ENCODE measurements at regions of chr9 and their contacts with region 1.

Region 1: GRCh38 chr9:114385412-114386181 is 2.2 kb downstream of the AKNA start:
- DNase-seq: peak; percentile 87 to 96
- ATAC-seq: peak; percentile 60 to 88 (median 74)
- H3K4me3 ChIP-seq: peak overlapping the region; percentile 88
- H3K4me3 Mint-ChIP-seq: peak overlapping the region; percentile 97
- H3K27ac ChIP-seq: peak overlapping the region; percentile 100
- H3K27ac Mint-ChIP-seq: peak overlapping the region; percentile 79 to 98
- H3K4me1 ChIP-seq: peaks cover 77% of the 10 kb centered on the region
- H3K4me1 Mint-ChIP-seq: peaks cover 88 to 94% of the 10 kb centered on the region in 2 donors
- H3K27me3 ChIP-seq: no peaks in the 10 kb centered on the region
- H3K27me3 Mint-ChIP-seq: no peaks in the 10 kb centered on the region
- CTCF ChIP-seq: no peak

Region 2: DNA sequence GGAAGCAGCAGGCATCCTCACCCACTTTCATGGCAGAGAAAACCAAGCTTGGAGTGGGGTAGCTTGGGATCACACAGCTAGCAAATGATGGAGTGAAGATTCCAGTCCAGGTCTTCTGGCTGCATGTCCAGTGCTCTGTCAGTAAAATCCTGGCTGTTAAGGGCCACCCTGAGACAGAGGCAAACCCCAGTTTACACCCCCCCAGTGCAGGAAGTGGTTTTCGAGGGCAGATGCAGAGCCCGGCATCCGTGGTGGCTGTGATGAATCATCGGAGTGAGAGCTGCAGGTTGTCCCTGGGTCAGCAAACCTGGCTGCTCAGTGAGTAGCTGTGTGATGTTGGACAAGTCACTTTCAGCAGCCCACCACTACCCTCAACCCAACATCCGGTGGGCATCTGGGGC is 806.7 kb before region 1 on chr9:
- intact Hi-C with region 1: loop called (anchors 10 kb)
- DNase-seq: peak; percentile 88 to 90
- ATAC-seq: peak; percentile 62 to 80 (median 78)
- H3K4me3 ChIP-seq: no peak overlapping the region
- H3K4me3 Mint-ChIP-seq: peak overlapping the region; percentile 77
- H3K27ac ChIP-seq: peak overlapping the region; percentile 81
- H3K27ac Mint-ChIP-seq: peak overlapping the region; percentile 92 to 93
- H3K4me1 ChIP-seq: peaks cover 86% of the 10 kb centered on the region
- H3K4me1 Mint-ChIP-seq: peaks cover 88 to 100% of the 10 kb centered on the region in 2 donors
- H3K27me3 ChIP-seq: no peaks in the 10 kb centered on the region
- H3K27me3 Mint-ChIP-seq: no peaks in the 10 kb centered on the region
- CTCF ChIP-seq: no peak

Region 3: GRCh38 chr9:114339130-114339908 is 46.3 kb before region 1 on chr9:
- intact Hi-C with region 1: no loop called
- DNase-seq: peak; percentile 63 to 78
- ATAC-seq: peak; percentile 77 to 83 (median 79)
- H3K4me3 ChIP-seq: no peak overlapping the region
- H3K4me3 Mint-ChIP-seq: no peak overlapping the region
- H3K27ac ChIP-seq: peak overlapping the region; percentile 39
- H3K27ac Mint-ChIP-seq: peak overlapping the region; percentile 78 to 84
- H3K4me1 ChIP-seq: peaks cover 17% of the 10 kb centered on the region
- H3K4me1 Mint-ChIP-seq: peaks cover 32 to 50% of the 10 kb centered on the region in 2 donors
- H3K27me3 ChIP-seq: no peaks in the 10 kb centered on the region
- H3K27me3 Mint-ChIP-seq: no peaks in the 10 kb centered on the region
- CTCF ChIP-seq: peak; percentile 80

Region 4: GRCh38 chr9:114366334-114367128 is 19.1 kb before region 1 on chr9:
- intact Hi-C with region 1: loop called (anchors 1 kb)
- DNase-seq: peak in 1 of 2 donors; percentile 78
- ATAC-seq: peak; percentile 27 to 49 (median 33)
- H3K4me3 ChIP-seq: no peak overlapping the region
- H3K4me3 Mint-ChIP-seq: peak overlapping the region; percentile 77
- H3K27ac ChIP-seq: peak overlapping the region; percentile 100
- H3K27ac Mint-ChIP-seq: peak overlapping the region; percentile 79 to 86
- H3K4me1 ChIP-seq: peaks cover 89% of the 10 kb centered on the region
- H3K4me1 Mint-ChIP-seq: peaks cover 54 to 69% of the 10 kb centered on the region in 2 donors
- H3K27me3 ChIP-seq: no peaks in the 10 kb centered on the region
- H3K27me3 Mint-ChIP-seq: no peaks in the 10 kb centered on the region
- CTCF ChIP-seq: no peak

Region 5: DNA sequence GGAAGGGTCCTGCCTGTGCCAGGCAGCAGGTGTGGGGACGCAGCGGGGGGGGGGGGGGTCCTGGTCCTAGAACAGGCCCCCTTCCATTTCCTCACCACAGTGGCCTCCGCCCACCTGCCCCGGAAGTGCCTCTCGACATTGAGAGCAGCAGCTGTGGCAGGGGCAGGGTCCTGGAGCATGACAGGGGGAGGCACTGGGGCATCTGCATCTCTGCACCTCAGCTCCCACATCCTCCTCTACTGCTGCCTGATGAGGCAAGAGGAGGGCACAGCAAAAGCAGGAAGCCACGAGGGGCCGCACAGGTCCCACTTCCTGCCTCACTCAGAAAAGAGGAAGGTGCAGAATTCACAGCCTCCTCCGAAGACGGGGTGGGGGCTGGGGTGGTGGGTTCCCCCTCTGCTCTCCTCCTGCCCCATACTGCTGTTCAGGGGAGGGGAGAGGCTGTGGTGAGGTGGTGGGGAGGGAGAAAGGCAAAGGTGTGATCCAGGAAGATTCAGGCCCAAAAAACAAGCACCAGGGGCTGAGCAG is 12.6 kb before region 1 on chr9:
- intact Hi-C with region 1: loop called (anchors 1 kb)
- DNase-seq: peak; percentile 73 to 95
- ATAC-seq: peak; percentile 51 to 82 (median 65)
- H3K4me3 ChIP-seq: peak overlapping the region; percentile 6
- H3K4me3 Mint-ChIP-seq: peak overlapping the region; percentile 68
- H3K27ac ChIP-seq: peak overlapping the region; percentile 100
- H3K27ac Mint-ChIP-seq: peak overlapping the region; percentile 79 to 86
- H3K4me1 ChIP-seq: peaks cover 99% of the 10 kb centered on the region
- H3K4me1 Mint-ChIP-seq: peaks cover 49 to 81% of the 10 kb centered on the region in 2 donors
- H3K27me3 ChIP-seq: no peaks in the 10 kb centered on the region
- H3K27me3 Mint-ChIP-seq: no peaks in the 10 kb centered on the region
- CTCF ChIP-seq: no peak

Region 6: GRCh38 chr9:114397848-114398605 is 12.4 kb after region 1 on chr9:
- intact Hi-C with region 1: loop called (anchors 1 kb)
- DNase-seq: peak; percentile 96
- ATAC-seq: peak; percentile 93 to 98 (median 93)
- H3K4me3 ChIP-seq: peak overlapping the region; percentile 93
- H3K4me3 Mint-ChIP-seq: peak overlapping the region; percentile 98
- H3K27ac ChIP-seq: peak overlapping the region; percentile 97
- H3K27ac Mint-ChIP-seq: peak overlapping the region; percentile 94 to 95
- H3K4me1 ChIP-seq: peaks cover 41% of the 10 kb centered on the region
- H3K4me1 Mint-ChIP-seq: peaks cover 11 to 42% of the 10 kb centered on the region in 2 donors
- H3K27me3 ChIP-seq: no peaks in the 10 kb centered on the region
- H3K27me3 Mint-ChIP-seq: no peaks in the 10 kb centered on the region
- CTCF ChIP-seq: no peak

Region 7: GRCh38 chr9:114450833-114451706 is 65.5 kb after region 1 on chr9:
- intact Hi-C with region 1: no loop called
- DNase-seq: peak in 1 of 2 donors; percentile 68
- ATAC-seq: peak; percentile 80 to 96 (median 93)
- H3K4me3 ChIP-seq: no peak overlapping the region
- H3K4me3 Mint-ChIP-seq: no peak overlapping the region
- H3K27ac ChIP-seq: peak overlapping the region; percentile 64
- H3K27ac Mint-ChIP-seq: peak overlapping the region; percentile 21 to 80
- H3K4me1 ChIP-seq: peaks cover 32% of the 10 kb centered on the region
- H3K4me1 Mint-ChIP-seq: peaks cover 20 to 34% of the 10 kb centered on the region in 2 donors
- H3K27me3 ChIP-seq: no peaks in the 10 kb centered on the region
- H3K27me3 Mint-ChIP-seq: peaks cover 0 to 4% of the 10 kb centered on the region in 2 donors
- CTCF ChIP-seq: no peak

Region 8: DNA sequence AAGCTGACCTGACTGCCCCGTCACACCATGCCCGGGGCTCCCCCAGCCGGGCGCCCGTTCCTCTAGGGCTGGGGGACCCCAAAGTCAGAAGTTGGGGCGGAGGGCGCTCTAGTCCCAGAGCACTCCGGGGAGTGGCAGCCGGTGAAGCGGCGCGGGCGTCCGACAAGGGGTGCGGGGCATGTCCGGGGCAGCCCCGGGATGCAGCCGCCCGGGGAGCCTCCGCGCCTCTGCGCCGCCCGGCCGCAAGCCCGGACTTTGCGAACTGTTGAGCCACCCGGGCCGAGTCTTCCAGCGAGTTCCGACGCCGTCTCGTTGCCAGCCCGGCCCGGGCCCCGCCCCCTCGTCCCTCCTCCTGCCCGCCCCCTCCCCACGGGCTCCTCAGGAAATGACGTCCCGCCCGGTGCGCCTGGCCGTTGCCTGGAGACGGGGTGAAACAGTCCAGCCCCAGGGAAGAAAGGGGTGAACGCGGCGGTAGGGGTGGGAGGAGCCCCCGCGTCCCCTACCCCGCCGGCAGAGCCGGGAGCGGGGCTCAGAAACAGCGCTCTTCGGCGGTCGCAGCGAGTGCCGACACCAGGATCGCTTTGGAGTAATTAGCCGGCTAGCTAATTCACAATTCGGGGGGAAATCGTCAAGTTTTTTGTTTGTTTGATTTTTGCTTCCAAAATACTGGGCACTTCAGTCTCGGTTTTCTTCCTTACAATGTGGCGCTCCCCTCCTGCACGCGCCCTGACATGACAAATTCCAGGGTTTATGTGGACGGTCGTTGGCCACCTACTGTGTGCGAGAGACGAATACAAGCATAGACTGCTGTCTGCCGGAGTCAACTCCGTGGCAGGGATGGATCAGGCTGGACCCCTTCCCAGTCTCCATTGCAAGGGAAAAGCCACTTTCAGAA is 119.8 kb after region 1 on chr9 and contains the start of gene WHRN:
- intact Hi-C with region 1: loop called (anchors 5 kb)
- DNase-seq: peak; percentile 86 to 96
- ATAC-seq: peak; percentile 82 to 94 (median 89)
- H3K4me3 ChIP-seq: peak within 1 kb of the TSS; percentile 53
- H3K4me3 Mint-ChIP-seq: peak within 1 kb of the TSS; percentile 91
- H3K27ac ChIP-seq: peak within 1 kb of the TSS; percentile 29
- H3K27ac Mint-ChIP-seq: peak within 1 kb of the TSS; percentile 83 to 91
- H3K4me1 ChIP-seq: peaks cover 33% of the 10 kb centered on the region
- H3K4me1 Mint-ChIP-seq: peaks cover 25 to 28% of the 10 kb centered on the region in 2 donors
- H3K27me3 ChIP-seq: peaks cover 25% of the 10 kb centered on the region
- H3K27me3 Mint-ChIP-seq: peaks cover 37 to 44% of the 10 kb centered on the region in 2 donors
- CTCF ChIP-seq: no peak
- total RNA-seq, gene WHRN: 29.8 to 90.6 (median 36.8) TPM

Measured in natural killer cell (primary cell).